ENCODE measurements at regions of chr13 and their contacts with region 1.

Region 1: GRCh38 chr13:28763887-28764286 is 45.1 kb upstream of the SLC46A3 start:
- DNase-seq: no peak
- H3K4me3 ChIP-seq: no peak overlapping the region
- H3K27ac ChIP-seq: no peak overlapping the region
- H3K4me1 ChIP-seq: no peaks in the 10 kb centered on the region; a peak in 1 of 7 replicates
- H3K27me3 ChIP-seq: no peaks in the 10 kb centered on the region
- CTCF ChIP-seq: no peak
- EP300 ChIP-seq: no peak
- POLR2A ChIP-seq: no peak
- RAD21 ChIP-seq: no peak

Region 2: DNA sequence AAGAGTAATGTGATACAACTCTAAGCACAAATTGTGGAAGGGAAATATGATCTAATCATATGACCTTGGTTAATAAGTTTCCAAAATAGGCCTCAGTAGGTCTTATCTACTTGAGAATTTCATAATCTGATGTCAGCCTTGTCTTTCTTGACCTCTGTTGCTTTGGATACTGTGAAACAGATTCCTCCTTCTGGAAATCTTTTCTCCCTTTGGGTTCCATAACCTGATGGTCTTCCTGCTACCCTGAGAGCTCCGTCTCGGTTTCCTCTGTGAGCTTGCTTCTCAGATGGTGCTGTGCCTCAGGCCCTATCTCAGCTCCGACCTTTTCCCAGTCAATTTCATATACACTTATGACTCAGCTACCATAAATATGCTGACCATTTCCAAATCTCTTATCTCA is 38.8 kb before region 1 on chr13:
- CTCF ChIA-PET with region 1: no interaction called
- POLR2A ChIA-PET with region 1: no interaction called
- DNase-seq: no peak
- H3K4me3 ChIP-seq: no peak overlapping the region
- H3K27ac ChIP-seq: no peak overlapping the region
- H3K4me1 ChIP-seq: no peaks in the 10 kb centered on the region
- H3K27me3 ChIP-seq: no peaks in the 10 kb centered on the region; a peak in 1 of 7 replicates
- CTCF ChIP-seq: no peak
- EP300 ChIP-seq: no peak
- POLR2A ChIP-seq: no peak
- RAD21 ChIP-seq: no peak

Region 3: GRCh38 chr13:28753243-28753887 is 10.5 kb before region 1 on chr13:
- CTCF ChIA-PET with region 1: interaction called, 10 read pairs
- POLR2A ChIA-PET with region 1: interaction called, 3 read pairs
- DNase-seq: peak in 1 of 2 experiments; percentile 50
- H3K4me3 ChIP-seq: no peak overlapping the region
- H3K27ac ChIP-seq: no peak overlapping the region
- H3K4me1 ChIP-seq: peaks cover 3 to 11% (median 4%) of the 10 kb centered on the region in 4 experiments
- H3K27me3 ChIP-seq: 0 out of 7 replicates have a peak, but pooled peaks cover 0 to 2% (median 0%) of the 10 kb centered on the region in 4 experiments
- CTCF ChIP-seq: no peak
- EP300 ChIP-seq: no peak
- POLR2A ChIP-seq: no peak
- RAD21 ChIP-seq: no peak

Region 4: DNA sequence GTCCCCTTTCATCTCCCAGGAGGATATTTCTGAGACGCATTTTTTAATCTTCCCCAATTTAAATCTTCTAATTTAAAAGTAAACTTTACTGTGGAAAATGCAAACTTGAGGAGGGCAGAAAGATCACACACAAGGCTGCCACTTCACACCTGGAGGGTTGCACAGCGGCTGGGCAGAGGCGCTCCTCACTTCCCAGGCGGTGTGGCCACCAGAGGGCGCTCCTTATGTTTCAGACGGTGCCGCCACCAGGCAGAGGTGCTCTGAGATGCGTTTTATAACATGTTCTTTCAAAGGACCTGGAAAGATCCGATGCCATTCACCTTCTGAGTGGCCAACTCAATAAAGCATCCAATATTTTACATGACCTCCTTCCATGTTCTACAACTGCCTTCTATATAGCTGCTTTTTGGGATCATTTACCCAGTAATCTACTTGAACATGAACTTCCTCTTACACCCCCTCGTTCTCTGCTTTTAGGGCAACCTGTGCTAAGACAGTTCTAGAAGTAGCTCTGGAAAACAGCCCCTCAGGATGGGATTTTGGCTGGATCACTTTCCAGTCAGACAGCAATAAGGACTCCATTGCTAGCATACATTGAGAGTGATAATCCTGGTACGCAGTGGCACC is 41.4 kb after region 1 on chr13:
- CTCF ChIA-PET with region 1: no interaction called
- POLR2A ChIA-PET with region 1: no interaction called
- DNase-seq: peak in 1 of 2 experiments; percentile 96
- H3K4me3 ChIP-seq: no peak overlapping the region
- H3K27ac ChIP-seq: no peak overlapping the region
- H3K4me1 ChIP-seq: no peaks in the 10 kb centered on the region
- H3K27me3 ChIP-seq: no peaks in the 10 kb centered on the region
- CTCF ChIP-seq: peak; percentile 67 to 79 (median 79)
- EP300 ChIP-seq: peak in 1 of 2 experiments; percentile 96; a peak in 1 of 3 replicates
- POLR2A ChIP-seq: no peak
- RAD21 ChIP-seq: peak; percentile 73 to 74

Measured in H1 (cell line).